GM12878 (cell line): ENCODE measurements at regions of chr7 and their contacts with region 1.

Region 1: GRCh38 chr7:99504603-99505323 is at the start of gene ZKSCAN5:
- DNase-seq: peak; percentile 84
- ATAC-seq: peak; percentile 90
- H3K4me3 ChIP-seq: peak within 1 kb of the TSS; percentile 91
- H3K27ac ChIP-seq: peak within 1 kb of the TSS; percentile 83
- H3K4me1 ChIP-seq: peaks cover 5% of the 10 kb centered on the region
- H3K27me3 ChIP-seq: no peaks in the 10 kb centered on the region
- CTCF ChIP-seq: no peak; a peak in 1 of 6 replicates
- EP300 ChIP-seq: no peak
- POLR2A ChIP-seq: peak; percentile 94
- RAD21 ChIP-seq: no peak
- polyA plus RNA-seq, gene ZKSCAN5: 2.5 to 2.7 TPM

Region 2: DNA sequence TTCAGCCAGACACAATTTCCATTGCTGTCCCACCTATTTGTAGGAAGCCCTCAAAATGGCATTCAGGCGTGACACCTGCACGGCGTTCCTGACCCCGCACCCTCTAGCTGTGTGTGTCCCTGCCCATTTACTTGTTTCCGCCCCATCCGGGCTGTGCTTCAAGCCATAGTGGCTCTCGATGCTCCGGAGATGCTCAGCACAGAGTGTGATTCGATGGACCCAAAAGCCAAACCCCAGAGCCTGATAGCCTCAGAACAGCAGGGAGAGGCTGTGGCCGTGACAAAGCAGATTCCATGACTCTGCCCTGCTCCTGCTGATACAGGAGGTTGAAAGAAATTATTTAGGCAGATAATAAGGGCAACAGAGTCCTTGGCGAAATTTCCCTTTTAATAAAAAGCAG is 82.6 kb before region 1 on chr7:
- CTCF ChIA-PET with region 1: no interaction called
- POLR2A ChIA-PET with region 1: no interaction called
- RAD21 ChIA-PET with region 1: no interaction called
- SMC1A ChIA-PET with region 1: no interaction called
- in situ Hi-C with region 1: no loop called
- intact Hi-C with region 1: no loop called
- DNase-seq: no peak
- ATAC-seq: no peak
- H3K4me3 ChIP-seq: no peak overlapping the region
- H3K27ac ChIP-seq: no peak overlapping the region
- H3K4me1 ChIP-seq: no peaks in the 10 kb centered on the region
- H3K27me3 ChIP-seq: no peaks in the 10 kb centered on the region
- CTCF ChIP-seq: no peak
- EP300 ChIP-seq: no peak
- POLR2A ChIP-seq: no peak
- RAD21 ChIP-seq: no peak

Region 3: DNA sequence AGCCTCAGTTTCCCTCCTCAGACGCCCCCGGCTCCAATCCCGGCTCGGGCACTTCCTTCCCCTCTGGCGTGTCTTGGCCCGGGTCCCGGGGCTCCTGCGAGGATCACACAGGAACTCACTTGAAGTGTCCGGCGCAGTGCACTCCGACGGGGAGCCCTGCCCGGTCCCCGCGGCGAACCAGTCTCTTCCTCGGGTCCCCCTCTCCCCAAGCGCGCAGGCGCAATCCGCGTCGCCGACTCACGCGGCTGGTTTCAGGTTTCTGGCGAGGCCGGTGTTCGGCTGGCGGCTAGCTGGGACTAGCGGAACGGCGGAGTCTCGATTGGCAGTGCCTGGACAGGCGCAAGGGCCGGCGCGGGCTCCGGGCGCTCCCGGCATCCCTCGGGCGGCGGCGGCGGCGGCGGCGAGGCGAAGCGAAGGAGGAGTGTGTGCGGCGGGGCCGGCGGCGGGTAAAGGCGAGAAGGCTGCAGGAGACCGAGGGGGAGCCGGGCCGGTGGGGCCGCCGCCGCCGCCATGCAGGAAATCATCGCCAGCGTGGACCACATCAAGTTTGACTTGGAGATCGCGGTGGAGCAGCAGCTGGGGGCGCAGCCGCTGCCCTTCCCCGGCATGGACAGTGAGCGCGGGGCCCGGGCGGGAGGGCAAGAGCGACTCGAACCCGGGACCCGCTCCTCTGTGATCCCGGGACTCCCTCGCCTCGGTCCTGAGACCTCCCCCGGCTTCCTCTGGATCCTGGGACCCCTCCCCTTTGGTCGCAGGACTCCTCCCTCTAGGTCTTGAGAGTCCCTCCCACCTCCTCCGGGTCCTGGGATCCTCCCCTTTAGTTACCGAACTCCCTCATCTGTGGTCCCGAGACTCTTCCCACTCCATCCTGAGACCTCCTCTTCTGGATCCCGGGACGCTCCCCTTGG is 65.9 kb before region 1 on chr7 and contains the starts of genes CPSF4 and PTCD1:
- CTCF ChIA-PET with region 1: no interaction called
- POLR2A ChIA-PET with region 1: interaction called, 5 read pairs
- RAD21 ChIA-PET with region 1: no interaction called
- SMC1A ChIA-PET with region 1: no interaction called
- in situ Hi-C with region 1: no loop called
- intact Hi-C with region 1: loop called (anchors 2 kb)
- DNase-seq: peak; percentile 71
- ATAC-seq: peak; percentile 96
- H3K4me3 ChIP-seq: peak within 1 kb of the TSS; percentile 93
- H3K27ac ChIP-seq: peak within 1 kb of the TSS; percentile 80
- H3K4me1 ChIP-seq: peaks cover 11% of the 10 kb centered on the region
- H3K27me3 ChIP-seq: no peaks in the 10 kb centered on the region
- CTCF ChIP-seq: no peak
- EP300 ChIP-seq: no peak
- POLR2A ChIP-seq: peak; percentile 89
- RAD21 ChIP-seq: no peak
- polyA plus RNA-seq, gene CPSF4: 13.6 to 14.9 TPM
- polyA plus RNA-seq, gene PTCD1: 0.26 to 0.42 TPM

Region 4: DNA sequence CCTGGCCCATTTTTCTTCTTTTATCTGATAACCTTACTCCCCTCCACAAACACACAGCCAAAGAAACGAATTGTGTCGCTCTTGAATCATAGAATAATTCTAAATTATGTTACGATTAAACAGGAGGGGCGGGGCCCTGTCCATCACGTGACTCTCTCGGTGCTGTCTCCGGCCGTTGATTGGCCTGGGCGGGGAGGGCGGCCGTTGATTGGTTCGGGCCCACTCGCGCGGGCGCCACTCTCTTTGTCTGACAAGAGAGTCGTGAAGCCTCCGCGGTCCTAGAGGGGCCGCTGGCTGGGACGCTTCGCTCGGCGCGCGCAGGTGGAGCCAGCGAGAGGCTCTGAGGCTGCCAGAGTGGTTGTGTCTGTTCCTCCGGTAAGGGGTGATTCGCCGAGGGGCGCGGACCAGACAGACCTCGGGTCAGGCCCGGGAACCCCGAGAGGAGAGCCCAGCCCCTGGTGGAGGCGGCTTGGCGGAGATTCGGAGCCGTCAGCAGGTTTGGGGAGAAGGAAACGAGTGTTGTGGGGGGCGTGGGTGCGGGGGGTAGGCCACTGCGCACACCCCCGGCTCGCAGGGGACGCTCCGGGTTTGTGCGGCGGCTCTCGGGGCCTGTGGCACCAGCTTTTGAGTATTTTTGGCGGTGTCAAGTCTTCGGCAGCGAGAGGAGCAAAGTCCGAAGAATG is 32.1 kb before region 1 on chr7 and contains the start of gene ZNF789:
- CTCF ChIA-PET with region 1: interaction called, 3 read pairs
- POLR2A ChIA-PET with region 1: interaction called, 10 read pairs
- RAD21 ChIA-PET with region 1: interaction called, 3 read pairs
- SMC1A ChIA-PET with region 1: interaction called, 4 read pairs
- in situ Hi-C with region 1: no loop called
- intact Hi-C with region 1: loop called (anchors 2 kb)
- DNase-seq: peak; percentile 70
- ATAC-seq: peak; percentile 99
- H3K4me3 ChIP-seq: peak within 1 kb of the TSS; percentile 86
- H3K27ac ChIP-seq: peak within 1 kb of the TSS; percentile 88
- H3K4me1 ChIP-seq: no peaks in the 10 kb centered on the region
- H3K27me3 ChIP-seq: no peaks in the 10 kb centered on the region
- CTCF ChIP-seq: no peak
- EP300 ChIP-seq: no peak
- POLR2A ChIP-seq: peak; percentile 92
- RAD21 ChIP-seq: no peak
- polyA plus RNA-seq, gene ZNF789: 5.6 to 6.0 TPM

Region 5: DNA sequence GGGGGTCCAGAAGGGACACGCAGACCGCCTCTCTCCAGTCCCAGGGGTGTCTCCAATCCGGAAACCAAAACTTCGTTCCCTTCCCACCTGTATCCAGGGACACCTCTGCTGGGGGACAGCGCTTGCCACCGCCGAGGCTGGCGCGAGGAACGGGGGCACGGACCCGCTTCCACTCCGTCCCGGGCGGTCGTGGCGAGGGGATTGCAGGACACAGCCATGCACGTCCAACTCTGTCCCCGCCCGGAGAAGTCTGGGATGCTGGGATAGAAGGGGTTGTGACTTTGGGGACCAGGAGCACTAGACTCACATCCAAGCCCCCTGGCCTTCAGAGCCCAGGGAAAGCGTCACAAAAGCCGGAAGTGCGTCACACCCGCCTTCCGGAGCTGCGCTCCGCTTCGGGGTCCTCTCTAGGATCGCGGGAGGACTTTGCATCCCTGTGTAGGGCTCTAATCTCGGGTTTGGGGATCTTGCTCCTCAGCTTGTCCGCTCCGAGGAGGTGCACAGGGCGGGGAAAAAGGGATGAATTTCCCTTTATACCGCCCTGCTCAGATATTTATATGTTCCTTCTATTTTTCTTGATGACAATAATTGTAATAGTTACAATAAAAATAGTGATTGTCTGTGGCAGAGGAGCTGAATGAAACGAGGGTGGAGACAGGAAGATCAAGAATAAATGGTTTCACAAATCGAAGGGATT is 47.2 kb after region 1 on chr7 and contains the start of gene FAM200A:
- CTCF ChIA-PET with region 1: interaction called, 3 read pairs
- POLR2A ChIA-PET with region 1: interaction called, 18 read pairs
- RAD21 ChIA-PET with region 1: interaction called, 10 read pairs
- SMC1A ChIA-PET with region 1: interaction called, 5 read pairs
- in situ Hi-C with region 1: no loop called
- intact Hi-C with region 1: loop called (anchors 2 kb)
- DNase-seq: peak; percentile 49
- ATAC-seq: peak; percentile 100
- H3K4me3 ChIP-seq: peak within 1 kb of the TSS; percentile 95
- H3K27ac ChIP-seq: peak within 1 kb of the TSS; percentile 93
- H3K4me1 ChIP-seq: 0 out of 2 replicates have a peak, but pooled peaks cover 3% of the 10 kb centered on the region
- H3K27me3 ChIP-seq: no peaks in the 10 kb centered on the region
- CTCF ChIP-seq: no peak
- EP300 ChIP-seq: no peak
- POLR2A ChIP-seq: peak; percentile 94
- RAD21 ChIP-seq: no peak
- polyA plus RNA-seq, gene FAM200A: 2.7 to 3.1 TPM

Region 6: DNA sequence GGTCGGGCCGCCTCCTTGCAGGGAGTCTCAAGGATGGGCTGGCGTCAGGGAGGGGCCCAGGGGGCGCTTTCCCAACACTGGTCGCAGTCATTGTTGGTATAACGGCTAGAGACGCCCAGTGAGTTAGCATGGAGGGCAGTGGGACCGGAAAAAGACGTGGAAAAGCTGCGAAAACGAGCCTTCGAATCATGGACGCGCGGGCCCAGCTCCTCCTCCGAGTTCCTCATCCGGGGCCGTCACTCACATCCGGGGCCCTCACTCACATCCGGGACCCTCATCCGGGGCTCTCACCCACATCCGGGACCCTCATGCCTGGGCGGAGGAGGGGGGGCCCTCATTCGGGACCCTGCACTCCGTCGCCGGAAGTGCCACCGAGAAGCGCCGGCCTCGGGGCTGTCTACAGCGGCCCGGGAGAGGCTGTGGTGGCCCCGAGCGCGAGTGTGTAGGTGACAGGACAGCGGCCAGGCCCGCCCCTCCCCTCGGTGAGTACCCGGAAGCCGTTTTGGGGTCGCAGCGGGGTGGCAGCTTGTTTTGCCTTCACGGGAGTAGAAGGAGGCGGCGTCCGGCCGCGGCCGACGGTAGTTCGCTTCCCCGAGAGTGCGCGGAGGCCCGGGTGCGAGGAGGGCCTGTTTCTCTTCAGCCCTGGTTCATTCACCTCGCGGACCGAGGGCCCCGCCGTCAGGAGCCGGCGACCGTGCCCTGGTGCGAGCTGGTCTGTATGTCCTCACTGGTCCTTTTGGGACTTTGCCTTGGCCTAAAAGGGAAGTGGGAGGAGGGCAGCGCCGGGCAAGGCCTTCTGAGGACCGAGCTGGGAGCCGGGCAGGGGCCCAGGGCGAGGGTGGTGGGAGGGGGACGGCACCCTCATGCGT is 53.8 kb after region 1 on chr7 and contains the start of gene ZNF655:
- CTCF ChIA-PET with region 1: interaction called, 3 read pairs
- POLR2A ChIA-PET with region 1: interaction called, 18 read pairs
- RAD21 ChIA-PET with region 1: interaction called, 10 read pairs
- SMC1A ChIA-PET with region 1: interaction called, 5 read pairs
- in situ Hi-C with region 1: no loop called
- intact Hi-C with region 1: loop called (anchors 2 kb)
- DNase-seq: peak; percentile 53
- ATAC-seq: peak; percentile 93
- H3K4me3 ChIP-seq: peak within 1 kb of the TSS; percentile 100
- H3K27ac ChIP-seq: peak within 1 kb of the TSS; percentile 94
- H3K4me1 ChIP-seq: no peaks in the 10 kb centered on the region
- H3K27me3 ChIP-seq: no peaks in the 10 kb centered on the region
- CTCF ChIP-seq: no peak
- EP300 ChIP-seq: no peak
- POLR2A ChIP-seq: peak; percentile 96
- RAD21 ChIP-seq: no peak
- polyA plus RNA-seq, gene ZNF655: 14.5 to 21.4 TPM

Region 7: GRCh38 chr7:99616359-99617191 is 111.8 kb after region 1 on chr7 and contains the start of gene ZSCAN25:
- CTCF ChIA-PET with region 1: no interaction called
- POLR2A ChIA-PET with region 1: interaction called, 8 read pairs
- RAD21 ChIA-PET with region 1: no interaction called
- SMC1A ChIA-PET with region 1: no interaction called
- in situ Hi-C with region 1: no loop called
- intact Hi-C with region 1: loop called (anchors 1 kb)
- DNase-seq: peak; percentile 81
- ATAC-seq: peak; percentile 97
- H3K4me3 ChIP-seq: peak within 1 kb of the TSS; percentile 88
- H3K27ac ChIP-seq: peak within 1 kb of the TSS; percentile 89
- H3K4me1 ChIP-seq: peaks cover 2% of the 10 kb centered on the region; the same call in 1 of the 2 replicates
- H3K27me3 ChIP-seq: no peaks in the 10 kb centered on the region
- CTCF ChIP-seq: peak; percentile 30 to 47 (median 32)
- EP300 ChIP-seq: no peak
- POLR2A ChIP-seq: peak; percentile 96
- RAD21 ChIP-seq: peak; percentile 24; the same call in 1 of the 2 replicates
- polyA plus RNA-seq, gene ZSCAN25: 0.79 to 0.98 TPM